SK-N-SH (cell line): ENCODE measurements at regions of chr1 and their contacts with region 1.

Region 1: DNA sequence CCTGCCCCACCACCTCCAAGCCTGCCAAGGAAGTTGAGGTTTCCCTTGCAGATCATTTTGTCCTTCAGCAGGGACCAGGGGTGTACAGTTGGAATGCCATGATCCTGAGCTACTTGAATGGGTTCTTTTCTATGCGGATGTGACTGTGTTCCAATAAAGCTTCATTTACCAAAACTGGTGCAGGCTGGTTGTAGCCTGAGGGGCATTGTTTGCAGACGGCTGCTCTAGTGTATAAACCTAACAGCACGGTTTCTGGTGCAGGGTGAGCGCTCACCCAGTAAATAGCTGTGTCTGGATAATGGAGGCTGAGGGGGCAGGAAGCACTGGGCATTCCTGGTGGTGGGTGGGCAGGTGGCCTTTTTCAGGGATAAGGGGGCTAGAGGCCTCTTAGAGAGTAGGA is 72.7 kb upstream of the ACTL8 start:
- DNase-seq: peak; percentile 72
- H3K4me3 ChIP-seq: no peak overlapping the region
- H3K27ac ChIP-seq: peak overlapping the region in 1 of 2 experiments; percentile 79; a peak in 2 of 4 replicates
- H3K4me1 ChIP-seq: peaks cover 0 to 42% of the 10 kb centered on the region in 2 experiments; a peak in 2 of 4 replicates
- H3K27me3 ChIP-seq: no peaks in the 10 kb centered on the region
- CTCF ChIP-seq: no peak
- EP300 ChIP-seq: no peak
- RAD21 ChIP-seq: no peak

Region 2: GRCh38 chr1:17671741-17672140 is 10.7 kb before region 1 on chr1:
- CTCF ChIA-PET with region 1: interaction called, 12 read pairs
- POLR2A ChIA-PET with region 1: interaction called, 7 read pairs
- DNase-seq: peak; percentile 80
- H3K4me3 ChIP-seq: no peak overlapping the region
- H3K27ac ChIP-seq: peak overlapping the region in 1 of 2 experiments; percentile 95; a peak in 2 of 4 replicates
- H3K4me1 ChIP-seq: peaks cover 0 to 59% of the 10 kb centered on the region in 2 experiments; a peak in 2 of 4 replicates
- H3K27me3 ChIP-seq: no peaks in the 10 kb centered on the region
- CTCF ChIP-seq: no peak
- EP300 ChIP-seq: no peak
- RAD21 ChIP-seq: 0 out of 2 replicates have a peak, but pooled peaks have one; percentile 12

Region 3: GRCh38 chr1:17742583-17742982 is 60.2 kb after region 1 on chr1:
- CTCF ChIA-PET with region 1: no interaction called
- POLR2A ChIA-PET with region 1: no interaction called
- DNase-seq: peak; percentile 69
- H3K4me3 ChIP-seq: no peak overlapping the region
- H3K27ac ChIP-seq: peak overlapping the region in 1 of 2 experiments; percentile 31; a peak in 1 of 4 replicates
- H3K4me1 ChIP-seq: peaks cover 0 to 21% of the 10 kb centered on the region in 2 experiments; a peak in 1 of 4 replicates
- H3K27me3 ChIP-seq: no peaks in the 10 kb centered on the region
- CTCF ChIP-seq: no peak
- EP300 ChIP-seq: no peak
- RAD21 ChIP-seq: no peak

Region 4: GRCh38 chr1:17802164-17802563 is 119.8 kb after region 1 on chr1:
- CTCF ChIA-PET with region 1: no interaction called
- POLR2A ChIA-PET with region 1: no interaction called
- DNase-seq: no peak
- H3K4me3 ChIP-seq: no peak overlapping the region
- H3K27ac ChIP-seq: no peak overlapping the region
- H3K4me1 ChIP-seq: no peaks in the 10 kb centered on the region; a peak in 1 of 4 replicates
- H3K27me3 ChIP-seq: no peaks in the 10 kb centered on the region; the same call in 1 of the 2 replicates
- CTCF ChIP-seq: no peak
- EP300 ChIP-seq: no peak
- RAD21 ChIP-seq: no peak